ENCODE measurements at regions of chr4 and their contacts with region 1.

Region 1: GRCh38 chr4:175953960-175954521 is 111.6 kb upstream of the WDR17 start:
- DNase-seq: no peak
- H3K4me3 ChIP-seq: no peak overlapping the region
- H3K27ac ChIP-seq: no peak overlapping the region
- H3K4me1 ChIP-seq: no peaks in the 10 kb centered on the region
- H3K27me3 ChIP-seq: no peaks in the 10 kb centered on the region
- CTCF ChIP-seq: peak in 4 of 11 experiments; percentile 11 to 44 (median 19)
- POLR2A ChIP-seq: no peak

Region 2: DNA sequence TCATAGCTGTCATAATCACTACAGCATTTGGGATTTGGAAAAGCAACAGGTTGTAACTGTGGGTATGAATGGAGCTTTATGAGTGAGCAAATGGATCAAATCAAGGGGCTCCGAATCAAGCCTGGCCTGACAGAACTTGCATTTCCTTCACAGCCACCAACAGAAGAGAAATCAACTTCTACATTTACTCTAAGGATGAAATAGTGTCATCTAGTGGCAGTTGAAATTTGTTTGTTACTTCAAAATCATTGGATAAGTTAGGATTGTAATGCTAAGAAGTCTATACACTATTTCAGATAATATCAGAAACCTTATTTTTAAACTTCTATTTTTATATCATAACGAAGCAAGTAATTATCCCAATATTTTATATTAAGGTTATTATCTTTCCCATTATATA is 100.9 kb after region 1 on chr4:
- intact Hi-C with region 1: loop called (anchors 10 kb)
- DNase-seq: no peak
- H3K4me3 ChIP-seq: no peak overlapping the region
- H3K27ac ChIP-seq: no peak overlapping the region
- H3K4me1 ChIP-seq: peaks cover 0 to 9% (median 0%) of the 10 kb centered on the region in 6 donors
- H3K27me3 ChIP-seq: no peaks in the 10 kb centered on the region
- CTCF ChIP-seq: peak in 3 of 11 experiments; percentile 22 to 39 (median 27)
- POLR2A ChIP-seq: no peak

Measured in spleen (tissue), 13 donors.